Breast epithelium (tissue), 4 donors: ENCODE measurements at regions of chr13 and their contacts with region 1.

Region 1: DNA sequence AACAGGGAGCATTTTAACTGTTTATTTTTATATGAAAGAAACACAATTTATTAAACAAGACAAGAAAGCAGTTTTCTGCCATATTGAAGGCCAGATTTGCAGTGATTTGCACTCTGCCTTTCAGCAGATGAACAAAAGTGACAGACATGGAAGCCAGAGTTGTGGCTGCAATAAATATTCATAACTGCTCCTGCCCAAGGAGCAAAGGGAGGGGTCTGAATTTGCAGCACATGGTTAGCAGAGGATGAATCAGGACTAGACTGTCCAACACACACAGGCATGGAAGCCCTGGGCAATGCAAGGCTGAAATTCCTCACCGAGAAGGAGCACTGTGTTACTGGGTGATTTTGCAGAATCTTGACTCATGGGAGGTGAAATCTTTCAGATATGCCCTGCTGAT is 418.2 kb downstream of the DCT start:
- DNase-seq: no peak
- H3K4me3 ChIP-seq: no peak overlapping the region
- H3K27ac ChIP-seq: no peak overlapping the region
- H3K4me1 ChIP-seq: no peaks in the 10 kb centered on the region
- H3K27me3 ChIP-seq: no peaks in the 10 kb centered on the region
- CTCF ChIP-seq: no peak
- POLR2A ChIP-seq: no peak

Region 2: GRCh38 chr13:92668157-92668556 is 1393.1 kb before region 1 on chr13:
- intact Hi-C with region 1: loop called (anchors 5 kb)
- DNase-seq: no peak
- H3K4me3 ChIP-seq: no peak overlapping the region
- H3K27ac ChIP-seq: no peak overlapping the region
- H3K4me1 ChIP-seq: no peaks in the 10 kb centered on the region
- H3K27me3 ChIP-seq: no peaks in the 10 kb centered on the region
- CTCF ChIP-seq: no peak
- POLR2A ChIP-seq: no peak

Region 3: GRCh38 chr13:94109715-94110374 is 48.5 kb after region 1 on chr13:
- intact Hi-C with region 1: no loop called
- DNase-seq: no peak
- H3K4me3 ChIP-seq: no peak overlapping the region
- H3K27ac ChIP-seq: no peak overlapping the region
- H3K4me1 ChIP-seq: no peaks in the 10 kb centered on the region
- H3K27me3 ChIP-seq: no peaks in the 10 kb centered on the region
- CTCF ChIP-seq: no peak
- POLR2A ChIP-seq: no peak

Region 4: GRCh38 chr13:94121686-94122085 is 60.4 kb after region 1 on chr13:
- intact Hi-C with region 1: loop called (anchors 2 kb)
- DNase-seq: no peak
- H3K4me3 ChIP-seq: no peak overlapping the region
- H3K27ac ChIP-seq: no peak overlapping the region
- H3K4me1 ChIP-seq: no peaks in the 10 kb centered on the region
- H3K27me3 ChIP-seq: no peaks in the 10 kb centered on the region
- CTCF ChIP-seq: no peak
- POLR2A ChIP-seq: no peak

Region 5: GRCh38 chr13:94753327-94753726 is 692.0 kb after region 1 on chr13:
- intact Hi-C with region 1: no loop called
- DNase-seq: no peak
- H3K4me3 ChIP-seq: no peak overlapping the region
- H3K27ac ChIP-seq: no peak overlapping the region
- H3K4me1 ChIP-seq: no peaks in the 10 kb centered on the region
- H3K27me3 ChIP-seq: no peaks in the 10 kb centered on the region
- CTCF ChIP-seq: no peak
- POLR2A ChIP-seq: no peak